PC-9 (cell line): ENCODE measurements at regions of chr3 and their contacts with region 1.

Region 1: DNA sequence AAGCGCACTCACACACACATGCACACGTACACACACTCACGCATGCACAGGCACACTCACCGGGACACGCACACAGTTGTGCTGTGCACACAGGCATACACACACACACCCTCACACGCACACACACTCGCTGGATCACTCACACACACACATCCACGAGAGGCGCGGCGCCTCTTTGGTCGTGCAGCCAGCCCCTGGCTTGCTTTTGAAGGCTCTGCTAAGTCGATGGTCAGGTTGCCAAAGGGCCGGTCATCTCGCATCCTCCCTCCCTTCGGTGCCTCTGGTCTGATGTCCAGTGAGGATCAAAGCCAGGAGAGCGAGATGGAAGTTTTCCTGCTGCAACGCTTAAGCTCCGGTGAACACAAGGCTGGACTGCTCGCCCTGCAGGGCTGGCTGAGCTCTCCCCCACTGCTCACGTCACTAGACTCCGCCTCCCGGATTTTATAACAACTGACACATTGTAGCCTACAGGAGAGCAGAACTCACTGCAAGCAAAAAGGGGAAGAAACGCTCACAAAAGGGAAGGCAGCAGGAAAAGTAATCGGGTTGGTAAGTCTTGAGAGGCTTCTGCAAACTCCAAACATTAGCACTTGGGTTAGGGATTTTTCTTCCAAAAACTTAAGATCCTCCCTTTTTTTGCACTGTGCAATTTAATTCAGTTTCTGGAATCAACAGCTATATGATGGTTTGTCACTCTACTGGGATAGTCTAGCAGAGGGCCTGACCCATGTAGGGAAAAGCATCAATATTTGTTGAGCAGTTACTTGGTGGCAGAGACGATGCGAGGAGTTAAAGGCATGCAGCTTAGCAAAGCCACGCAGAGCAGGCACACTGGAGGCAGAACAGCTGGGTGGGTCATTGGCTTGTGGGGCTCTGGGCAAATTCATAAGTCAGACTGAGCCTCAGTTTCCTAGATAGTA is at the start of gene SRGAP3:
- DNase-seq: peak; percentile 80 to 88
- H3K4me3 ChIP-seq: peak within 1 kb of the TSS; percentile 62
- H3K27ac ChIP-seq: no peak within 1 kb of the TSS
- H3K4me1 ChIP-seq: peaks cover 30% of the 10 kb centered on the region
- H3K27me3 ChIP-seq: no peaks in the 10 kb centered on the region
- CTCF ChIP-seq: 0 out of 2 replicates have a peak, but pooled peaks have one; percentile 27
- total RNA-seq, gene SRGAP3: 12.9 and 17.5 TPM in 2 replicates

Region 2: DNA sequence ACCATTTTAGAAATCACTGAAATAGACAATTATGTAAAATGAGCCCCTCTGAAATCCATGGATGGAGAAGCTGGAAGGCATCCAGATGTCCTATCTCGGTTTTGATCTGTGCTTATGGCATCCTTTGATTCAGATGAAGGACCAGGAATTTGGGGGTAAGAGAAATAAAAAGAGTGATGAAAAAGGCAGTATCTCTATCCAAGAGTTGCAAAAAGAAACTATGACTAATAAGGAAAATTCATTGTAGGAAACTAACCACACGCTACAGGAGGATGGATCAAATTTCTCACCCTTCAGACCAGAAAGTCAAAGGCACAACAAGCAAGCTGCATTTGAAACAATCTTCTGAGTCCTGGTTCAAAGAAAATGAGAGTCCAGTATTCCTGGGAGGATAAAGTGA is 34.9 kb before region 1 on chr3:
- CTCF ChIA-PET with region 1: no interaction called
- POLR2A ChIA-PET with region 1: interaction called, 4 read pairs
- intact Hi-C with region 1: loop called (anchors 1 kb)
- DNase-seq: peak; percentile 12 to 74
- H3K4me3 ChIP-seq: no peak overlapping the region
- H3K27ac ChIP-seq: peak overlapping the region; percentile 64
- H3K4me1 ChIP-seq: peaks cover 14% of the 10 kb centered on the region
- H3K27me3 ChIP-seq: no peaks in the 10 kb centered on the region
- CTCF ChIP-seq: no peak